ENCODE measurements at regions of chr20 and their contacts with region 1.

Region 1: DNA sequence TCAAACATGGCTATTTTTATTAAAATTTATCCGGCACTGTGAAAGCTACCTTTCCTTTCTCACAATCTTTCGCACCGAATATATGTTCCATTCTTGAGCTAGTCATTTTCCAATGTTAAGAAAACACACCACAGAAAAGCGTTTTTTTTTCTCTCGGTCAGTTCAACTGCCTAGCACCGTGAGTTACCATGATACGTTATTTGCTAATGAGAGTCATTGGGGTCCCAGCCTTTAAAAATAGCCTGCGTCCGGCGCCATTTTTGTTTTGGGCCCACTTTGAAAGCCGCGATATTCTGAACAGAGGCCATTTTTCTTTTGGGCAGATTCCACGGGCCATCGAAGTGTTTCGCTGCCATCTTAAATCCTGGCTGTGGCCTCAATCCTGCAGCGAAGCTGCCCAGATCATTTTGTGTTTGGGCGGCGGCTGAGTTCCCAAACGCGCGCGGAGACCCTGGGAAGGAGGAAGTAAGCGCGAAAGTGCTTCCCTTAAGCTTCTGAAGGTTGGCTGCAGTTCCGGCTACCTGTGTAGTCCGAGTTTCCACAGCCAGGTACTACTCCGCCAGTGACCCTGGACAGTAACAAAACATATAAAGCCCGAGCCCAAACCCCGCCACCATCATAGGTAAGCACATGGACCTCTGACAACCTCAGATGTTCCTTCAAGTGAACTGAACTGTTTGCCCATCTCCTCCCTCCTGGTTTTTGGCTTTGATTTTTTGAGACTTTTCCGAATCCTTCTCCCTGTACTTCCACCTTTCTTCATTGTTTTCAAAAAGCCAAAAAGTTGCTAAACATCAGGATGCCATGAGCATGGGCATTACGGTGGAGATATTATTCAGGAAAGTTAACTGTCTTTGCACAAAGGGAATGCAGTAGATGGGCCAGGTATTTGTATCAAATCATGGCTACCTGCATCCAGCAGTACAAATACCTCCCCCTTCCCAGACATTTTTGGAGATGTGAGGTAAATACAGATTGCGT is at the start of gene SLX4IP:
- DNase-seq: peak; percentile 90 to 99
- ATAC-seq: peak; percentile 75 to 83
- H3K4me3 ChIP-seq: peak within 1 kb of the TSS; percentile 75
- H3K27ac ChIP-seq: peak within 1 kb of the TSS; percentile 90 to 96
- H3K4me1 ChIP-seq: peaks cover 48% of the 10 kb centered on the region
- CTCF ChIP-seq: no peak
- EP300 ChIP-seq: no peak
- POLR2A ChIP-seq: peak; percentile 73
- RAD21 ChIP-seq: peak in 1 of 2 experiments; percentile 27; a peak in 1 of 5 replicates
- polyA plus RNA-seq, gene SLX4IP: 7.5 and 8.0 TPM in 2 replicates

Region 2: GRCh38 chr20:10219452-10219791 is 215.7 kb before region 1 on chr20:
- CTCF ChIA-PET with region 1: interaction called, 4 read pairs
- POLR2A ChIA-PET with region 1: interaction called, 33 read pairs
- DNase-seq: peak; percentile 56 to 74
- ATAC-seq: peak; percentile 62 to 74
- H3K4me3 ChIP-seq: peak overlapping the region; percentile 70
- H3K27ac ChIP-seq: peak overlapping the region; percentile 77 to 93
- H3K4me1 ChIP-seq: peaks cover 63% of the 10 kb centered on the region
- CTCF ChIP-seq: no peak
- EP300 ChIP-seq: no peak
- POLR2A ChIP-seq: peak; percentile 14; the same call in 1 of the 2 replicates
- RAD21 ChIP-seq: peak; percentile 22 to 56; a peak in 4 of 5 replicates

Region 3: DNA sequence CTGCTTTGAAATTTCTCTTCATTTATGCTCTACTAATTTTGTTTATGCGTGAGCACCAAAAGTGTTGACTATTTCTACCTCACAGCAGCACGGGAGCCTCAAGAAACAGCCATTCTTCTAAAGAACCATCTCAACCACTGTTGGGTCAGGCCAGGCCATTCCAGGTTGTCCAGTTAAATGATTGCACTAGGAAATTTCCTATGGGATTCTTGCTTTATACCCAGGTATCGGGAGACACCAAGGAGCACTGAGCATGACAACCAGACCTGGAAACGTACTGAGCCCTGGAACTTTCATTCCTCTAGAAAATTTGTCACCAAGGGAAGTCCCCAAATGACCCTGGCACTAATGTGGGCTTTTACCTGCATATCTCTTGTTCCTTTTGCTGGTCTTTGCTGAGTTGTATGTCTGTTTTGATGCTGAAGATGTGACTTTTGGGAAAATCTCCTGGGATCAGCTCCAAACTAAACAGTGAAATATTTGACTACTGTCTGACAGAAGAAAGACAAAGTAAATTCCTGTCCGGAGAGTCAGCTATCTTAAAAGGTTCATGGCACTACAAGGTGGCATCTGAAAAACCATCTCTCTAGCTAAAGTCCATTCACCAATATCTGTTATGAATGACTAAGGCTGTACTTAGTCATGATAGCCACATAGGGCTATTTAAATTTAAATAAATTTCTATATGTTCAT is 146.0 kb before region 1 on chr20:
- CTCF ChIA-PET with region 1: no interaction called
- POLR2A ChIA-PET with region 1: interaction called, 10 read pairs
- DNase-seq: peak in 1 of 2 experiments; percentile 89
- ATAC-seq: peak; percentile 90 to 94
- H3K4me3 ChIP-seq: no peak overlapping the region
- H3K27ac ChIP-seq: peak overlapping the region; percentile 86 to 90
- H3K4me1 ChIP-seq: peaks cover 48% of the 10 kb centered on the region
- CTCF ChIP-seq: no peak
- EP300 ChIP-seq: peak; percentile 97
- POLR2A ChIP-seq: no peak
- RAD21 ChIP-seq: peak; percentile 42 to 67

Region 4: GRCh38 chr20:10369723-10370090 is 65.4 kb before region 1 on chr20:
- CTCF ChIA-PET with region 1: interaction called, 6 read pairs
- POLR2A ChIA-PET with region 1: interaction called, 31 read pairs
- DNase-seq: peak; percentile 82 to 95
- ATAC-seq: peak; percentile 90 to 95
- H3K4me3 ChIP-seq: no peak overlapping the region
- H3K27ac ChIP-seq: peak overlapping the region; percentile 90 to 93
- H3K4me1 ChIP-seq: peaks cover 55% of the 10 kb centered on the region
- CTCF ChIP-seq: no peak
- EP300 ChIP-seq: peak; percentile 83 to 90; a peak in 4 of 5 replicates
- POLR2A ChIP-seq: no peak
- RAD21 ChIP-seq: peak; percentile 6 to 52; a peak in 2 of 5 replicates

Region 5: GRCh38 chr20:10412591-10413408 is 22.3 kb before region 1 on chr20:
- CTCF ChIA-PET with region 1: interaction called, 30 read pairs
- POLR2A ChIA-PET with region 1: interaction called, 16 read pairs
- DNase-seq: peak; percentile 43 to 55
- ATAC-seq: peak; percentile 69 to 82; a peak in 5 of 6 replicates
- H3K4me3 ChIP-seq: no peak overlapping the region
- H3K27ac ChIP-seq: peak overlapping the region; percentile 63 to 82
- H3K4me1 ChIP-seq: peaks cover 83% of the 10 kb centered on the region
- CTCF ChIP-seq: peak; percentile 78
- EP300 ChIP-seq: no peak
- POLR2A ChIP-seq: no peak
- RAD21 ChIP-seq: peak; percentile 69 to 76

Region 6: DNA sequence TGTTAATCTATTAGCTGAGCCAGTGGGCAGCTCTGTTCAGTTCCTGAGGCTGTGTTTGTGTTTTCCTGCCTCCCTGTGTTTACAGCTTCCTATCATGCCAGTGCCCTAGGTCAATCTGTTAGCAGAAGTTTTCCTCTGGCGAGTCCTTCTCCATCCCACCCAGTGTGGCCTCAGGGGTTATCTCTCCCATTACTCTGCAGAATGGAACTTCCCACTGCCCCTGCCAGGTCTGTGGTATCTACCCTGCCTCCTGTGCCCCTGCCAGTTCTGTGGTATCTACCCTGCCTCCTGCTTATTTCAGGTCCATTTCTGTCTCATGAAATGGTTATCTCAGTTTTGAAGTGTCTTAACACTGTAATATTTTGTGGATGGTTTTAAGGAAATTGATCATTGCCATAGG is 63.1 kb after region 1 on chr20:
- CTCF ChIA-PET with region 1: no interaction called
- POLR2A ChIA-PET with region 1: no interaction called
- DNase-seq: no peak
- ATAC-seq: peak; percentile 13 to 30; a peak in 2 of 6 replicates
- H3K4me3 ChIP-seq: no peak overlapping the region
- H3K27ac ChIP-seq: peak overlapping the region in 1 of 2 experiments; percentile 36; a peak in 3 of 6 replicates
- H3K4me1 ChIP-seq: peaks cover 14% of the 10 kb centered on the region; the same call in 2 of the 3 replicates
- CTCF ChIP-seq: no peak
- EP300 ChIP-seq: no peak
- POLR2A ChIP-seq: no peak
- RAD21 ChIP-seq: no peak

Region 7: GRCh38 chr20:10511509-10512251 is 76.6 kb after region 1 on chr20:
- CTCF ChIA-PET with region 1: interaction called, 3 read pairs
- POLR2A ChIA-PET with region 1: interaction called, 15 read pairs
- DNase-seq: peak; percentile 94 to 95
- ATAC-seq: peak; percentile 95 to 97
- H3K4me3 ChIP-seq: no peak overlapping the region
- H3K27ac ChIP-seq: peak overlapping the region; percentile 88 to 89
- H3K4me1 ChIP-seq: peaks cover 66% of the 10 kb centered on the region
- CTCF ChIP-seq: no peak
- EP300 ChIP-seq: peak; percentile 33 to 54; a peak in 2 of 5 replicates
- POLR2A ChIP-seq: no peak
- RAD21 ChIP-seq: 0 out of 5 replicates have a peak, but pooled peaks of 1 of the 2 experiments have one; percentile 32

Region 8: GRCh38 chr20:10536531-10536930 is 101.4 kb after region 1 on chr20:
- CTCF ChIA-PET with region 1: interaction called, 5 read pairs
- POLR2A ChIA-PET with region 1: interaction called, 13 read pairs
- DNase-seq: peak in 1 of 2 experiments; percentile 52
- ATAC-seq: peak in 1 of 2 experiments; percentile 37; a peak in 2 of 6 replicates
- H3K4me3 ChIP-seq: no peak overlapping the region
- H3K27ac ChIP-seq: peak overlapping the region; percentile 59 to 92
- H3K4me1 ChIP-seq: peaks cover 54% of the 10 kb centered on the region
- CTCF ChIP-seq: peak; percentile 68
- EP300 ChIP-seq: no peak
- POLR2A ChIP-seq: no peak
- RAD21 ChIP-seq: peak; percentile 76 to 83

Region 9: DNA sequence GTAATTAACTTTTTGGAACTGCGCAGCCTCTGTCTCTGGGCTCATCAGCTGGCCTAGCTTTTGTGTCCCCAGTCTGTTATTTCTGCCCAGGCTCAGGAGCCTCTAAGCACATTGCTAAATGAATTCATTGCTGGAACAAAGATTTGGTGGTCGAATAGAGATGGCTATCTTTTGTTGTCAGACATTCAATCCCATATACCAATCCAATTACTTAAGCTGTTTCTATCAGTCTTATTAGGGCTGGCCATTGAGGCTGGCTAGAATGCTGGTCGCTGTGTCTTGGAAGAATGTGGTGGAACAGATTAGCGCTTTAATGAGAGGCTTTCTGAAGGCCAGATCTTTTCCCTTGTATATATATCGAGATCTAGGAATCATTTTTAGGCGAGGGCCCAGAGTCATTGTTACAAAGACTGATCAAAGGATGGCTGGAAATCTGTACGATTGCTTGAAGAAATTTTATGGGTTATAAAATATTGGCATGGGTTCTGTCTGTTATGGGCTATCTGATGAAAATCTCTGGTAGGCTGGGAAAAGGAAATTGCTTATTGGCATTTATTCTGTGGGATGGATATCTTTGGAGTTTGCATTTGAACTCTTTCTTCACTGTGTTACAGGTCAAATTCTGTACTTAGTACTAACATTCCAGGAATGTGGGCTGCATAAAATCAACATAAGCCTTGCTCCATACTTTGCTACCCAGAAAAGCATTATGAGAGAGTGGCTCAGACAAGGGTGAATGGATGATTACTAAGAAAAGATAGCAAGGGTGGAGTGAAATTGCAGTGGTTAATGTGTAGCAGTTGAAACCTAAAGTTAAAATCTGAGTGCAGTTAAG is 273.4 kb after region 1 on chr20:
- CTCF ChIA-PET with region 1: no interaction called
- POLR2A ChIA-PET with region 1: no interaction called
- DNase-seq: peak; percentile 39 to 86
- ATAC-seq: peak; percentile 54 to 79; a peak in 4 of 6 replicates
- H3K4me3 ChIP-seq: no peak overlapping the region
- H3K27ac ChIP-seq: peak overlapping the region; percentile 86 to 91
- H3K4me1 ChIP-seq: peaks cover 80% of the 10 kb centered on the region
- CTCF ChIP-seq: no peak
- EP300 ChIP-seq: peak; percentile 81 to 92; a peak in 3 of 5 replicates
- POLR2A ChIP-seq: no peak
- RAD21 ChIP-seq: peak; percentile 34 to 51; a peak in 3 of 5 replicates

Measured in A549 (cell line).